ENCODE measurements at regions of chr7 and their contacts with region 1.

Region 1: DNA sequence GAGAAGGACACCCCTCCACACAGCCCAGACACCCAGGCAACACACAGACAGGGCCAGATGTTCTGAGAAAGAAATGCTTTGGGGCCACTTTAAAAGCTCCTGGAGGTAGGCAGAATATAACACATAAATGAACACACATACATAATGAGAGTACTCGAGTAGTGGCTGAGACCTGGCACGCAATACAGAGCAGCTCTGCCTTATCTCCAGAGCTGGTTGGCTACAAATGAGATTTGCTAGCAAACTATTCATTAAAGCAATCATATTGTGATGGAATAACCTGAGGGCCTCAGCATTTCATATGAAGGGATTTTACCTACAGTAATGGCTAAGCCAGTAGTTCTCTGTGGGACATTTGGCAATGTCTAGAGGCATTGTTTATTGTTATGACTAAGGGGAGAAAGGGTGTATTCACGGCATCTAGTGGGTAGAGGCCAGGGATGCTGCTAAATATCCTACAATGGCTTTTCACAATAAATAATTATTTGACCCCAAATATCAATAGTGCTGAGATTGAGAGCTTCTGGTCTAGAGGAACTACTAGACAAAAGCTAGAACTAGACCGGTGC is 5.5 kb upstream of the IMPDH1 start:
- DNase-seq: no peak
- ATAC-seq: no peak
- H3K4me3 Mint-ChIP-seq: no peak overlapping the region
- H3K27ac Mint-ChIP-seq: no peak overlapping the region
- H3K4me1 Mint-ChIP-seq: peaks cover 2% of the 10 kb centered on the region
- H3K27me3 Mint-ChIP-seq: no peaks in the 10 kb centered on the region

Region 2: GRCh38 chr7:128284102-128284501 is 131.2 kb before region 1 on chr7:
- CTCF ChIA-PET with region 1: no interaction called
- POLR2A ChIA-PET with region 1: no interaction called
- intact Hi-C with region 1: no loop called
- DNase-seq: no peak
- ATAC-seq: no peak
- H3K4me3 Mint-ChIP-seq: no peak overlapping the region
- H3K27ac Mint-ChIP-seq: no peak overlapping the region
- H3K4me1 Mint-ChIP-seq: no peaks in the 10 kb centered on the region
- H3K27me3 Mint-ChIP-seq: no peaks in the 10 kb centered on the region

Region 3: DNA sequence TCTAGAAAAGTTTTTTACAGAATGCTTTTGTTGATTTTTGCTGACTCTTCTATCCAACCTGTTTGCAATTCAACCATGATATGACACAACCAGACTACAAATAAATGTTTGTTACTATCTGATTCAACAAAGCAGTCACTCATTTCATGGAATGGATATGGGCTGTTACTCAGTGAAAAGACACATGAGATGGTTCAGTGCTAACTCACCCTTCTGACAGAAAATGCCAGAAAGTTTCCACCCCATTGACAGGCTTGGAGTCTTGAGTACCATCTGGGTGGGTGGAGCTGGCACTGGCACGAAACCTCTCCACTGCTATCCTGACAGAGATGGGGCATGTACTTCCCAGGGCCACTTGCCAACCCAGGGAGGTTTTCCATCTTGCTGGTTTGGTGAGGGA is 111.1 kb before region 1 on chr7:
- CTCF ChIA-PET with region 1: no interaction called
- POLR2A ChIA-PET with region 1: no interaction called
- intact Hi-C with region 1: no loop called
- DNase-seq: no peak
- ATAC-seq: no peak
- H3K4me3 Mint-ChIP-seq: no peak overlapping the region
- H3K27ac Mint-ChIP-seq: no peak overlapping the region
- H3K4me1 Mint-ChIP-seq: no peaks in the 10 kb centered on the region
- H3K27me3 Mint-ChIP-seq: no peaks in the 10 kb centered on the region

Region 4: GRCh38 chr7:128398016-128398840 is 17.1 kb before region 1 on chr7:
- CTCF ChIA-PET with region 1: interaction called, 19 read pairs
- POLR2A ChIA-PET with region 1: no interaction called
- intact Hi-C with region 1: no loop called
- DNase-seq: peak; percentile 65
- ATAC-seq: peak; percentile 59
- H3K4me3 Mint-ChIP-seq: no peak overlapping the region
- H3K27ac Mint-ChIP-seq: no peak overlapping the region
- H3K4me1 Mint-ChIP-seq: peaks cover 5% of the 10 kb centered on the region
- H3K27me3 Mint-ChIP-seq: no peaks in the 10 kb centered on the region

Region 5: DNA sequence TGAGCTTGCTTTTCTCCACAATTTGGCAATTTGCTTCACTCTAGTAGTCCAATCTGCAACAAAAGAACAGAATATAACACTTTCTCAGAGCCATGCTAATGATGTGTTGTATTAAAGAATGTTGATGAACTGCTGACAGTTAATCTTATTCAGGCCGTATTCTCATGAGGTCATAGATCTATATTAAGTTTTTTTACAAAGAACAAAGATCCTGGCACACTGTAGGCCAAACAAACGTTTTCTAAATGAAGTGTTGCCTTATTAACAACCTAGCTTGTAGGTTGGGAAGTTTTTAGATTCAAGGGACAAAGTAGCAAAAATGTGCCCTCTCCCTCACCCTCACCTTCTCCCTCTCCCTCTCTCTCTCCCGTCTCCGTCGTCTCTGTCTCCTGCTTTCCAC is 47.2 kb after region 1 on chr7:
- CTCF ChIA-PET with region 1: interaction called, 16 read pairs
- POLR2A ChIA-PET with region 1: no interaction called
- intact Hi-C with region 1: loop called in 1 of 2 experiments (anchors 1 kb)
- DNase-seq: no peak
- ATAC-seq: no peak
- H3K4me3 Mint-ChIP-seq: no peak overlapping the region
- H3K27ac Mint-ChIP-seq: no peak overlapping the region
- H3K4me1 Mint-ChIP-seq: peaks cover 21% of the 10 kb centered on the region
- H3K27me3 Mint-ChIP-seq: no peaks in the 10 kb centered on the region